GM10248 (cell line): ENCODE measurements at regions of chrX and their contacts with region 1.

Region 1: DNA sequence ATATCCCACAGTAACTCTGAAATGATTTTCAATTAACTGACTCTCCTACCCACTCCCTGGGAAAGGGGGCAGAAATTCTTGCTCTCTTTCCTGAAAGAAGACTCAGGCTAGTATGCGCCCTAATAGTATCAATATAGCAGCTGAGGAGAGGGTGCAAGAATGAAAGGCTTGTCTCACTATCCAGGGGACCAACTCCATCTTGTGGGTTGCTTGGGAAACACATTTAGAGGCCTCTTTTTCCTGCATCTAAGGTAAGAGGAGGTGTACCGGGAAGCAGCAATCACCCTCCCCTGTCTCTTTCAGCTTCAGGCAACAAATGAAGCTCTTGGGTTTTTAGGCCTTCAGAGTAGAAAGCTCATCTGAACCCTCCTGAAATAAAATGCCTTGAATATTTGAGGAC is 11.3 kb downstream of the TMEM255A start:
- DNase-seq: no peak
- CTCF ChIP-seq: no peak

Region 2: GRCh38 chrX:120274958-120275357 is 25.0 kb before region 1 on chrX:
- CTCF ChIA-PET with region 1: no interaction called
- POLR2A ChIA-PET with region 1: no interaction called
- DNase-seq: no peak
- CTCF ChIP-seq: no peak

Region 3: GRCh38 chrX:120287513-120288112 is 12.3 kb before region 1 on chrX:
- CTCF ChIA-PET with region 1: interaction called, 13 read pairs
- POLR2A ChIA-PET with region 1: no interaction called
- DNase-seq: no peak
- CTCF ChIP-seq: no peak